GM23248 (cell line): ENCODE measurements at regions of chr10 and their contacts with region 1.

Region 1: GRCh38 chr10:124732931-124733570 is 11.1 kb downstream of the FAM53B start:
- DNase-seq: no peak
- H3K4me3 ChIP-seq: no peak overlapping the region
- H3K27ac ChIP-seq: no peak overlapping the region
- H3K4me1 ChIP-seq: peaks cover 19% of the 10 kb centered on the region
- H3K27me3 ChIP-seq: no peaks in the 10 kb centered on the region

Region 2: DNA sequence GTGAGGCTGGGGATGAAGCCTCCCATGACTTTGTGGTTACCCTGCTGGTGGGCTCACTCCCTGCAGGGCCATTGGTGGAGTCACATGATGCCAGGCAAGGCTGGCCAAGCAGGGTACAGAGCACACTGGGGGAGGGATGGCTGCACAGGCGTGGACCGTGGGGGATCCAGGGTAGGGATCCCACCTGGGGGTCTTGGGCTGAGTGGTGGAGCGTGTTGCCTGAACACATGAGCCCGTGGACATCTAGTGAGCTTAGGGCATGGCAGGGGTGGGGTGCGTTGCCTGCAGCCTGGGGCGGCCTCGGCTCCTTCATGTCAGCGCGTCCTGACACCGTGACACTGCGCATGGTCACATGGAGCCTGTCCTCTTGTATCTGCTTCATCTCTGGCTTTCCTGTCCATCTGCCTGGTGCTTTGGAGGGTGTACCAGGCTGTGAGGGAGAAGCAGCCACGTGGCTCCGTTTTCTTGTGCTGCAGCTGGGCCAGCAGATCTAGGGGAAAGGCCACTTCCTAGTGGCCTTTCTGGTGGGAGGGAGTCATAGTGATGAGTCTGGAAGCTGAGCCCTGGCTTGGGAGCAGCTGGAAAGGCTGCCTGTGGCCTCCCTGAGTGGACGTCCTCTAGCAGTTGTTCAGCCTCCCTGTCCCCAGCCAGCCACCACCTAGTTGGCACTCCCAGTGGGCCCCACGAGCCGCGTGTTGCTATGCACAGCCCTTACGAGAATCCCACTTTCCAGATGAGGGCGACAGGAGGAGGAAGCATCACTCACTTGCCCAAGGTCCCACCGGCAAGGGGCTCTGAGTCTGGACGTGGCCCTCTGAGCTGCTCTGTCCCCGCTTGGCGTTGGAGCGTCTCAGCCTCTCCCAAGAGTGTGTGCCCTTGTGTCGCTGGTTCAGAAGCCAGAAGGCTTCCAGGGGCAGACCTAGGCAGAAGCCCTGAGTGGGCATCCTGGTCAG is 175.1 kb before region 1 on chr10:
- in situ Hi-C with region 1: loop called (anchors 10 kb)
- DNase-seq: no peak
- H3K4me3 ChIP-seq: no peak overlapping the region
- H3K27ac ChIP-seq: no peak overlapping the region
- H3K4me1 ChIP-seq: peaks cover 8% of the 10 kb centered on the region
- H3K27me3 ChIP-seq: no peaks in the 10 kb centered on the region

Region 3: DNA sequence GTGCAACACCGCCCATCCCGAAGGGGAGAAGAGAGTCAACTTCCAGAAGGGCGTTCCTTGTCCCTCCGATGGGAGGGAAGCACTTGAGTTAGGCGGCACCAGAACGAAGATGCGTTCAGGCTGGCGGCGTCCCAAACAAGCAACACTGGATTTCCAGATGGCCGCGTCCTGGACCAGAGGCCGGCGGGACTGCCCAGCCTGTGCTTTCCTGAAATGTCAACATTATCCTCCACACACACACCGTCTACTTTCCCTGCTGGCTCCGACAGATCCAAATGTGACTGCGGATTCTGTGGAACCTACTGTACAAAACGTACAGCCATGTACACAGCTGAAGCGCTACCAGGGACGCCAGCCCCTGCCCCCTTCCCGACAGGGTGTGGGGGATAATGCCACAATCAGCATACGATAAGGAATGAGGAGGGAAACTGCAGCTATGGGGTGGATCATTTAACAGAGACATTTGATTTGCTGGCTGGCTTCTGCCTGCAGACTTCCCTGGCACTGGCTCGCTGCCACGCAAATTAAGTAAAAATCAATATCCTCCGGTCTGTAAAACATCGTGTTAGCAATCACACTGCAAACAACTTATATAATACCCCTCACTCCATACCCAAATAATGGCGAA is 290.9 kb after region 1 on chr10:
- in situ Hi-C with region 1: no loop called
- DNase-seq: peak; percentile 43
- H3K4me3 ChIP-seq: no peak overlapping the region
- H3K27ac ChIP-seq: no peak overlapping the region
- H3K4me1 ChIP-seq: peaks cover 15% of the 10 kb centered on the region
- H3K27me3 ChIP-seq: no peaks in the 10 kb centered on the region